ENCODE measurements at regions of chrX and their contacts with region 1.

Region 1: DNA sequence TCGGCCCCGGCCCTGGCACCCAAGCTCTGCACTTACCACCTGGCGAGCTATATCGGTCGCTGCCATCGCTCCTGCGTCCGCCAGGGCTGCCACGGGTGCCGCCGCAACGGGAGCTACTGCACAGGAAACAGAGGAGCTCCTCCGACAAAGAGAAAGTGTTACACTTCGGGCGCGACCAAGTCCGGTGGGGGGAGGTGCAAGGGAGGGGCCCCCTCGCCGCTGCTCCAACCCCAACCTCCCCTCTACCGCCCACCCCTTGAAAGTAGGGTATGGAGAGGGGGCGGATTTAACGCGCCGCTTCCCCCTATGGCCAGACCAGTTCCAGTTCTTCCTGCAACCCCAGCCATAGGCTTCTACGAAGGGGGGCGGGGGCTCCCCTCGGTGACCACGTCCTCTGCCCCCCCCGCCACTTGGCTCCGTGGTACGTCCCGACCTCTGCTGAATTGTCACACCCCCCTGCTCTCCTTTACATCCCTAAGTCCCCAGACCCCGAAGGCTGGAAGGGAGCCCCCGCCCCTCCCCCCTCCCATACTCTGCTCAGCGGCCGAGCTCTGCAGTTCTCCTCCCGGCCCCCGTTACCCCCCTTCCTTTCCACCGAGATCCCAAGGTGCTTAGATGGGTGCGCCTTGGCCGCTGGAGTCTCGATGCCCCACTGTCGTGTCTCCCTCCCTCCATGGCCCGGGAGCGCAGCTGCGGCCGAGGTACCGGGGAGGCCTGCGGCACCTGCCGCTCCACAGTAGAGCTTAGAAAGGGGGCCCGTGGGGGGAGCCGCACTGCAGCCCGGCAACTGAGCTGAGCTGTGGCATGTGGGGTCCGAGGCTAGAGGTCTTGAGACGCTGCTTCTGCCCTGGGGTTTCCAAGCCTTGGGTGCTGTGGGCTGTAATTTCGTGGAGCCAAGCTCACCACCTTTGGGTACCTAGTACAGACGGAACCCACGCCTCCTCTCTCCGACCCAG is at the start of gene SEPTIN6:
- DNase-seq: peak; percentile 69 to 93 (median 88)
- ATAC-seq: peak; percentile 83
- H3K4me3 ChIP-seq: peak within 1 kb of the TSS; percentile 77
- H3K4me3 Mint-ChIP-seq: peak within 1 kb of the TSS; percentile 96 to 100 (median 99)
- H3K27ac ChIP-seq: peak within 1 kb of the TSS; percentile 89
- H3K27ac Mint-ChIP-seq: peak within 1 kb of the TSS; percentile 95 to 99 (median 98)
- H3K4me1 ChIP-seq: peaks cover 0 to 7% of the 10 kb centered on the region in 2 donors
- H3K4me1 Mint-ChIP-seq: peaks cover 7 to 41% (median 13%) of the 10 kb centered on the region in 7 donors
- H3K27me3 ChIP-seq: no peaks in the 10 kb centered on the region
- H3K27me3 Mint-ChIP-seq: no peaks in the 10 kb centered on the region
- total RNA-seq, gene SEPTIN6: 151 to 315 (median 221) TPM

Region 2: GRCh38 chrX:119574394-119575266 is 118.7 kb before region 1 on chrX and contains the start of gene UBE2A:
- CTCF ChIA-PET with region 1: no interaction called
- POLR2A ChIA-PET with region 1: interaction called, 4 read pairs
- intact Hi-C with region 1: loop called (anchors 1 to 5 kb)
- DNase-seq: peak; percentile 72 to 89 (median 85)
- ATAC-seq: peak; percentile 99
- H3K4me3 ChIP-seq: peak within 1 kb of the TSS; percentile 72
- H3K4me3 Mint-ChIP-seq: peak within 1 kb of the TSS; percentile 85 to 96 (median 92)
- H3K27ac ChIP-seq: peak within 1 kb of the TSS; percentile 88
- H3K27ac Mint-ChIP-seq: peak within 1 kb of the TSS; percentile 85 to 97 (median 90)
- H3K4me1 ChIP-seq: peaks cover 0 to 11% of the 10 kb centered on the region in 2 donors
- H3K4me1 Mint-ChIP-seq: peaks cover 7 to 35% (median 18%) of the 10 kb centered on the region in 7 donors
- H3K27me3 ChIP-seq: no peaks in the 10 kb centered on the region
- H3K27me3 Mint-ChIP-seq: no peaks in the 10 kb centered on the region
- total RNA-seq, gene UBE2A: 34.0 to 74.7 (median 60.2) TPM

Region 3: DNA sequence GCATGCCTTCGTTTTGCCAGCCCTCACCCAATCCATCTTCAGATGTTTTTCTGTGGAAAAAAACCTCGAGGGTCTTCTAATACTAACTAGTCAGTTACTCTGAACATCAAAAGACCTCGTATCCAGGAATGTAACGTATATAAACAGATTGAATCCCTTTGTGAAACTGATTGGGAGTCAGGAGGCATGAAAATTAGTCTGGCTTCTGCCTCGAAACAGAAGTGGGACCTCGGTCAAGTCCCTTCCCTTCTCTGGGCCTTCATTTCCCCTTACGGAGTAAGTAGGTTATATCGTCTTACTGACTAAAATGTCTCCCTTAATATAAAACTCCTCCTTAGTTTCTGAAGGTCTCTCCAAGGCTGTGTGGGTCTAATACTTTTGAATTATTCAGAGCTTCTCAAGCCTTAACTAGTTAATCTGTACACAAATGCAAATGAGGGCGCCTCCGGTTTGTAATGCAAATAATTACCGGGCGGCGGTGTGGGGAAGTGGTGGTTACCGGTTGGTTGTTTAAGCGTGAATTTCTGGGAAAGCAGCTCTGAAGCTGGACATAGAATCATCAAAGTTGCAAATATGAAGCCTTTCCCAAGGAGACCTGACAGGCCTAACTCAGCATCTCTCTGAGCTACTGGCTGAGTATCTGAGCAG is 75.7 kb before region 1 on chrX:
- CTCF ChIA-PET with region 1: interaction called, 3 read pairs
- POLR2A ChIA-PET with region 1: interaction called, 3 read pairs
- intact Hi-C with region 1: loop called in 1 of 2 experiments (anchors 5 kb)
- DNase-seq: no peak
- ATAC-seq: peak; percentile 27
- H3K4me3 ChIP-seq: no peak overlapping the region
- H3K4me3 Mint-ChIP-seq: no peak overlapping the region
- H3K27ac ChIP-seq: no peak overlapping the region
- H3K27ac Mint-ChIP-seq: peak overlapping the region in 4 of 9 donors; percentile 21 to 67 (median 50)
- H3K4me1 ChIP-seq: no peaks in the 10 kb centered on the region
- H3K4me1 Mint-ChIP-seq: peaks cover 0 to 14% (median 5%) of the 10 kb centered on the region in 7 donors
- H3K27me3 ChIP-seq: no peaks in the 10 kb centered on the region
- H3K27me3 Mint-ChIP-seq: no peaks in the 10 kb centered on the region

Region 4: GRCh38 chrX:119669424-119670037 is 23.8 kb before region 1 on chrX:
- CTCF ChIA-PET with region 1: interaction called, 22 read pairs
- POLR2A ChIA-PET with region 1: interaction called, 290 read pairs
- intact Hi-C with region 1: no loop called
- DNase-seq: no peak
- ATAC-seq: no peak
- H3K4me3 ChIP-seq: no peak overlapping the region
- H3K4me3 Mint-ChIP-seq: peak overlapping the region in 1 of 10 donors; percentile 5
- H3K27ac ChIP-seq: peak overlapping the region; percentile 21
- H3K27ac Mint-ChIP-seq: peak overlapping the region in 8 of 9 donors; percentile 31 to 82 (median 64)
- H3K4me1 ChIP-seq: peaks cover 0 to 18% of the 10 kb centered on the region in 2 donors
- H3K4me1 Mint-ChIP-seq: peaks cover 0 to 69% (median 27%) of the 10 kb centered on the region in 7 donors
- H3K27me3 ChIP-seq: no peaks in the 10 kb centered on the region
- H3K27me3 Mint-ChIP-seq: no peaks in the 10 kb centered on the region

Region 5: DNA sequence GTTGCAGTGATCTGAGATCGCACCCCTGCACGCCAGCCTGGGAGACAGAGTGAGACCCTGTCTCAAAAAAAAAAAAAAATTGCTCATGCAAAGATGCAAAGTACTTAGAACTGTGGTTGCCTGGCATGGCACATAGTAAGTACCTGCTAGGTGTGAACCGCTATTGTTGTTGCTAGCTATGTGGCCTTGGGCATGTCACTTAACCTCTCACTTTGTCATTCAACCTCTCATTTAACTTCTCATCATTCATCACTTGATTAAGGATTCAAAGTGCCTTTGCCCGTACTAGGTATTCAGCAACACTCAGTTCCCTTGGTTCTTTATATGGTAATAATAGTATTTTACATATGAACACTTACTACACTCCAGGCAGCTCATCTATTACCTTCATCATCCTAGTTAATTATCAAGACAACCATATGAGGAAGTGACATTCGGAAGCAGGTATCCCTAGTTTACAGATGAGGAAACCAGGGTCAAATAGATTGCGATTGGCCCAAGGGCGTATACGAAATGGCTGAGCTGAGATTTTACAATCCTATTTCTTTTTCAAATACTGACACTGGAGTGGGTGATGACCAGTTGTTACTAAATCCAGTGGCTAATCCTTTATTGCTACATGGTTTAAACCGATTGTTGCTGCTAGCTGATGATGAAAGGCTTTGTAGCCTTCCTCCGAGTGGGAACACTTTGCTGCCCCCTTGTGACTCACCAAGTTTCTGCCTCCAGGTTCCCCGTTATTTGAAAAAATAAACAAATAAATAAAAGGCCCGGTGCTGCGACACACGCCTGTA is 36.3 kb after region 1 on chrX:
- CTCF ChIA-PET with region 1: interaction called, 20 read pairs
- POLR2A ChIA-PET with region 1: interaction called, 4 read pairs
- intact Hi-C with region 1: loop called in 1 of 2 experiments (anchors 1 kb)
- DNase-seq: peak; percentile 23 to 77 (median 58)
- ATAC-seq: peak; percentile 85
- H3K4me3 ChIP-seq: no peak overlapping the region
- H3K4me3 Mint-ChIP-seq: no peak overlapping the region
- H3K27ac ChIP-seq: no peak overlapping the region
- H3K27ac Mint-ChIP-seq: peak overlapping the region in 3 of 9 donors; percentile 14 to 41 (median 25)
- H3K4me1 ChIP-seq: no peaks in the 10 kb centered on the region
- H3K4me1 Mint-ChIP-seq: peaks cover 0 to 13% (median 10%) of the 10 kb centered on the region in 7 donors
- H3K27me3 ChIP-seq: no peaks in the 10 kb centered on the region
- H3K27me3 Mint-ChIP-seq: no peaks in the 10 kb centered on the region

Region 6: GRCh38 chrX:119791438-119792231 is 98.3 kb after region 1 on chrX and contains the start of gene RPL39:
- CTCF ChIA-PET with region 1: no interaction called
- POLR2A ChIA-PET with region 1: interaction called, 14 read pairs
- intact Hi-C with region 1: loop called (anchors 2 kb)
- DNase-seq: peak; percentile 61 to 88 (median 82)
- ATAC-seq: peak; percentile 96
- H3K4me3 ChIP-seq: peak within 1 kb of the TSS; percentile 85
- H3K4me3 Mint-ChIP-seq: peak within 1 kb of the TSS; percentile 87 to 96 (median 92)
- H3K27ac ChIP-seq: peak within 1 kb of the TSS; percentile 91
- H3K27ac Mint-ChIP-seq: peak within 1 kb of the TSS; percentile 89 to 98 (median 97)
- H3K4me1 ChIP-seq: peaks cover 16 to 24% of the 10 kb centered on the region in 2 donors
- H3K4me1 Mint-ChIP-seq: peaks cover 5 to 33% (median 21%) of the 10 kb centered on the region in 7 donors
- H3K27me3 ChIP-seq: no peaks in the 10 kb centered on the region
- H3K27me3 Mint-ChIP-seq: no peaks in the 10 kb centered on the region
- total RNA-seq, gene RPL39: 2,181 to 4,347 (median 3,799) TPM

Region 7: DNA sequence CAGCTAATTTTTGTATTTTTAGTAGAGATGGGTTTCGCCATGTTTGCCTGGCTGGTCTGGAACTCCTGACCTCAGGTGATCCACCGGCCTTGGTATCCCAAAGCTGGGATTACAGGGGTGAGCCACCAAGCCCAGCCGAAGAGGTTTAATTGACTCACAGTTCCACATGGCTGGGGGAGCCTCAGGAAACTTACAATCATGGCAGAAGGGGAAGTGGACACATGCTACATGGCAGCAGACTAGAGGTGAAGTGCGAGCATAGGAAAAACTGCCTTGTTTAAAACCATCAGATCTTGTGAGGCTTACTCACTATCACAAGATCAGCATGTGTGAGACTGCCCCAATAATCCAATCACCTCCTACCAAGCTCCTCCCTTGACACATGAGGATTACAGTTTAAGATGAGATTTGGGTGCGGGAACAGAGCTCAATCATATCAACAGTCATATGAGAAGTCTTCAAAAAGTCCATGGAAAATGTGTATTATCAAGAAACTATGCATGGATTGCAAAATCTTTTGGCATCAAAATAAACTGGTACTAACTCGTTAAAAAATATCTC is 123.9 kb after region 1 on chrX:
- CTCF ChIA-PET with region 1: no interaction called
- POLR2A ChIA-PET with region 1: no interaction called
- intact Hi-C with region 1: no loop called
- DNase-seq: no peak
- ATAC-seq: no peak
- H3K4me3 ChIP-seq: no peak overlapping the region
- H3K4me3 Mint-ChIP-seq: no peak overlapping the region
- H3K27ac ChIP-seq: no peak overlapping the region
- H3K27ac Mint-ChIP-seq: peak overlapping the region in 1 of 9 donors; percentile 5
- H3K4me1 ChIP-seq: no peaks in the 10 kb centered on the region
- H3K4me1 Mint-ChIP-seq: peaks cover 0 to 14% (median 7%) of the 10 kb centered on the region in 7 donors
- H3K27me3 ChIP-seq: no peaks in the 10 kb centered on the region
- H3K27me3 Mint-ChIP-seq: no peaks in the 10 kb centered on the region